AG04450 (cell line): ENCODE measurements at regions of chr5 and their contacts with region 1.

Region 1: GRCh38 chr5:147576646-147577535 is 67.0 kb upstream of the DPYSL3 start:
- DNase-seq: no peak
- H3K4me3 ChIP-seq: no peak overlapping the region
- H3K27ac ChIP-seq: no peak overlapping the region
- H3K27me3 ChIP-seq: peaks cover 2% of the 10 kb centered on the region
- CTCF ChIP-seq: peak; percentile 98

Region 2: GRCh38 chr5:147188200-147189108 is 388.4 kb before region 1 on chr5:
- CTCF ChIA-PET with region 1: interaction called, 20 read pairs
- POLR2A ChIA-PET with region 1: no interaction called
- DNase-seq: peak; percentile 38
- H3K4me3 ChIP-seq: no peak overlapping the region
- H3K27ac ChIP-seq: no peak overlapping the region
- H3K27me3 ChIP-seq: no peaks in the 10 kb centered on the region
- CTCF ChIP-seq: peak; percentile 85

Region 3: GRCh38 chr5:147310059-147310704 is 266.7 kb before region 1 on chr5:
- CTCF ChIA-PET with region 1: interaction called, 10 read pairs
- POLR2A ChIA-PET with region 1: no interaction called
- DNase-seq: no peak
- H3K4me3 ChIP-seq: no peak overlapping the region
- H3K27ac ChIP-seq: no peak overlapping the region
- H3K27me3 ChIP-seq: no peaks in the 10 kb centered on the region
- CTCF ChIP-seq: no peak

Region 4: DNA sequence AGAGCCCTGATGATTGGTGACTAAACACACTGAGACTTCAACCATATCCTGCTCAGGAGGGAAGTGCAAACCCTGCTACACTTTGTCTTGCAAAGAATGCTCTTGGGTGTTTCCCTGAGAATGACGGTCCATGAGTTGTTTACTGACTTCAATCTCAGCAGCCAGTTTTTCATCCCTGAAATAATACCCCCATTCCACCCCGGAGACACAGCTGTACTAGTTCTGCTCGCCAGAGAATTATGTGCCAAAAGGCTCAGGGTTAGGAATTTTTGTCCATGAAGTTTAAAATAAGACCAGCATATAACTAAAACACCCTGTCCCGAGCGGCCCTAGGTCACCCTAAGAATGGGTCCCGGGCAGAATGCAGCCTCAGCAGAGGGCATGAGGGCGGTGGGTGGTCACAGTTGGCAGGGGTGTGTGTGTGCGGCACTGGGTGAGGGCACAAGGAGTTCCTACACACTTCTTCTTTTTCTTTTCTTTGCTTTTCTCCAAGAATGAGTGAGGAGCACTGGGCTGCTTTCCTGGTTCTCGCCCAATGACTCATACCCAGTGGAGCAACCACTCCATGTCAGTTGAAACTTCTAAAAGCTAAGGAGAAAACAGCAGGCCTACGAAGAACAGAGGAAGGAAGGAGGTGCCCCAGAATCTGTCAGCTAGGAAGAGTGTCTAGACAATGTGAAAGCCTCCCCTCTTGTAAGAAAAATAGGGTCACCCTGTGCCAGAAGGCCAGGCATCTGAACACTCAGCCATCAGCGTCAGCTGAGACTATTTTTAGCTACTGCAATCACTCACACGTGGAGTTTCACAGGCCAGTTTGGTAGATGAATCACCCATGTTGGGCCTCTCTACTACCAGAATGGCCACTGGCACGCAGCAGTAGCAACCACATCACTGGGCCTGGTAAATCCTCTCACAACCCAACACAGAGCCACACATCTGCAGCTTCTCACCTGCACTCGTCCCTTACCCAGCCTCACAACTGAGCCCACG is 172.9 kb before region 1 on chr5:
- CTCF ChIA-PET with region 1: interaction called, 29 read pairs
- POLR2A ChIA-PET with region 1: interaction called, 3 read pairs
- DNase-seq: peak; percentile 90
- H3K4me3 ChIP-seq: peak overlapping the region; percentile 43
- H3K27ac ChIP-seq: peak overlapping the region; percentile 98
- H3K27me3 ChIP-seq: no peaks in the 10 kb centered on the region
- CTCF ChIP-seq: no peak

Region 5: GRCh38 chr5:147448766-147449165 is 128.1 kb before region 1 on chr5:
- CTCF ChIA-PET with region 1: interaction called, 79 read pairs
- POLR2A ChIA-PET with region 1: interaction called, 6 read pairs
- DNase-seq: no peak
- H3K4me3 ChIP-seq: no peak overlapping the region
- H3K27ac ChIP-seq: no peak overlapping the region
- H3K27me3 ChIP-seq: no peaks in the 10 kb centered on the region
- CTCF ChIP-seq: no peak

Region 6: GRCh38 chr5:147558826-147559225 is 18.1 kb before region 1 on chr5:
- CTCF ChIA-PET with region 1: interaction called, 66 read pairs
- POLR2A ChIA-PET with region 1: no interaction called
- DNase-seq: peak; percentile 61
- H3K4me3 ChIP-seq: no peak overlapping the region
- H3K27ac ChIP-seq: no peak overlapping the region
- H3K27me3 ChIP-seq: no peaks in the 10 kb centered on the region
- CTCF ChIP-seq: peak; percentile 84

Region 7: GRCh38 chr5:147712598-147712997 is 135.7 kb after region 1 on chr5:
- CTCF ChIA-PET with region 1: no interaction called
- POLR2A ChIA-PET with region 1: no interaction called
- DNase-seq: no peak
- H3K4me3 ChIP-seq: no peak overlapping the region
- H3K27ac ChIP-seq: no peak overlapping the region
- H3K27me3 ChIP-seq: no peaks in the 10 kb centered on the region
- CTCF ChIP-seq: no peak